AG04449 (cell line): ENCODE measurements at regions of chr1 and their contacts with region 1.

Region 1: DNA sequence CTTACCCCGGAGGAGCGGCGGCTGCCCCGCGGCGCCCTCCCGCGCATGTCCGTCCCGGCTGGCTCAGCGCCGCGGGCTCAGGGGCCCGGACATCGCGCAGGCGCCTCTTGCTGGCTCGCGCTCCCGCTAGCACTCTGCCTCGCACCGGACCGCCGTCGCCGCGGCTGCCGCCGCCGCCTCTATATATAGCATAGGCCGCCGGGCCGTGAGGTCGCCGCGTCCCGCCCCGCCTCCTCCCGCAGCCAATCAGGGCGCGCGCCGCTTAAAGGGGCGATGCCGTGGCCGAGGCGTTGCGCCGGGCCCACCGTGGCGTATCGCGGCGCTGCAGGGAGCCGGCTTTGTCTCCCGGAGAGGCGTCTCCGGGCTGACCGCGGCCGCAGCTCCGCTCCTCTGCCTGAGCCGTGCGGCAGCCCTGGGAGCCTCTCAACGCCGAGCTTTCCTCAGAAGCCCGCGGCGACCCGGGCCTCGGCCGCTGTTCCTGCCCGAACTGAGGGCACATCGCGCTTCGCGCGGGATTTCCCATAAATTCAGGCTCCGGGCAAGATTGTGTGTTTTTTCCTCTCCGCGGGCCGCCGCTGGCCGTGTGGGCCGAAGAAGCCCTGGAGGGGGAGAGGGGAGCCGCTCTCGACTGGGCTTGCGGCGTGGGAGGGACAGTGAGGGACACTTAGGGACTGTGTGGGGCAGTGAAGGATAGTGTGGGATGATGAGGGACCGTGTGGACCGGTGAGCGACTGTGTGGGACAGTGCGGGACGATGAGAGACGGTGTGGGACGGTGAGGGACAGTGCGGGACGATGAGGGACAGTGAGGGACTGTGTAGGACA is at the start of gene ERRFI1:
- DNase-seq: no peak
- H3K4me3 ChIP-seq: peak within 1 kb of the TSS; percentile 80
- CTCF ChIP-seq: no peak

Region 2: DNA sequence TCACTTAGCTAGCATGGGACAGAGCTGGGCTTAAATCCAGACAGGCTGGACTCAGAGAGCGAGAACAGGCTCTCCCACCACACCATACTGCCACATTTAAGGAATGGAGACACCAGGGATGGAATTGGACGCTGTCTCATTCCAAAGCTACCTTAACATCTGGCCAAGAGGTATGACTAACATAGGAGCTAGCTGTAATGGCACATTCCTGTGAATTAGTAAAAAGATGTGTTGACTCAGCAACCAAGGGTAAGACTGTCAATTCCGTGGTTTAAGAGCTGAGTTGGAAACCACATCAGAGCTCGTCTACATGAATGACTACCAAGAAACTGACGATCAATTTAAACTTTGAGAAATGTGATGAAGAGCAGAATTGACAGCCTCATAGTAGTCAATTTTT is 77.4 kb before region 1 on chr1:
- CTCF ChIA-PET with region 1: no interaction called
- POLR2A ChIA-PET with region 1: no interaction called
- DNase-seq: peak; percentile 46
- H3K4me3 ChIP-seq: no peak overlapping the region
- CTCF ChIP-seq: no peak

Region 3: GRCh38 chr1:8040586-8040985 is 14.2 kb after region 1 on chr1:
- CTCF ChIA-PET with region 1: interaction called, 32 read pairs
- POLR2A ChIA-PET with region 1: interaction called, 5 read pairs
- DNase-seq: peak; percentile 90
- H3K4me3 ChIP-seq: no peak overlapping the region
- CTCF ChIP-seq: no peak

Region 4: GRCh38 chr1:8077120-8077573 is 50.8 kb after region 1 on chr1:
- CTCF ChIA-PET with region 1: interaction called, 12 read pairs
- POLR2A ChIA-PET with region 1: no interaction called
- DNase-seq: no peak
- H3K4me3 ChIP-seq: no peak overlapping the region
- CTCF ChIP-seq: no peak

Region 5: DNA sequence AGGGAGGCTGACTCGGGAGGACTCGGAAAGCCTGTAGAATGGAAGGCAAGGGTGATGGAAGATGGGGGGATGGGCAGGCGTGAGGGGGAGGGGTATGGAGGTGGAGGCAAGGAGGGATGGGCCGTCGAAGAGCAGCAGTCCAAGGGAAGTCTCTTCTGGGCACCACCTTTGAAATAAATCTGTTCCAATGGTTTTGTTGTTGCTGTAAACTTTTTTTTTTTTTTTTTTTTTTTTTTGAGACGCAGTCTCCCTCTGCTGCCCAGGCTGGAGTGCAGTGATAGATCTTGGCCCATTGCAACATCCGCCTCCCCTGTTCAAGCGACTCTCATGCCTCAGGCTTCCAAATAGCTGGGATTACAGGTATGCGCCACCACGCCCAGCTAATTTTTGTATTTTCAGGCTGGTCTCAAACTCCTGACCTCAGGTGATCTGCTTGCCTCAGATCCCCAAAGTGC is 212.5 kb after region 1 on chr1:
- CTCF ChIA-PET with region 1: interaction called, 10 read pairs
- POLR2A ChIA-PET with region 1: no interaction called
- DNase-seq: no peak
- H3K4me3 ChIP-seq: peak overlapping the region; percentile 32
- CTCF ChIP-seq: peak; percentile 8

Region 6: GRCh38 chr1:8302081-8302956 is 276.0 kb after region 1 on chr1:
- CTCF ChIA-PET with region 1: interaction called, 321 read pairs
- POLR2A ChIA-PET with region 1: no interaction called
- DNase-seq: no peak
- H3K4me3 ChIP-seq: no peak overlapping the region
- CTCF ChIP-seq: no peak

Region 7: GRCh38 chr1:8348777-8349491 is 322.6 kb after region 1 on chr1:
- CTCF ChIA-PET with region 1: interaction called, 138 read pairs
- POLR2A ChIA-PET with region 1: no interaction called
- DNase-seq: no peak
- H3K4me3 ChIP-seq: no peak overlapping the region
- CTCF ChIP-seq: peak; percentile 79